Activated T-helper 2 cell treated with anti-CD3 and anti-CD28 coated beads, Interferon-gamma antibody, Interleukin-2, Interleukin-4, amounts not matched to agents 10 μg/mL and 5 μg/mL and 100 μg/mL, durations not matched to agents 14 hours and 24 hours and 36 hours (primary cell): ENCODE measurements at regions of chrX and their contacts with region 1.

Region 1: DNA sequence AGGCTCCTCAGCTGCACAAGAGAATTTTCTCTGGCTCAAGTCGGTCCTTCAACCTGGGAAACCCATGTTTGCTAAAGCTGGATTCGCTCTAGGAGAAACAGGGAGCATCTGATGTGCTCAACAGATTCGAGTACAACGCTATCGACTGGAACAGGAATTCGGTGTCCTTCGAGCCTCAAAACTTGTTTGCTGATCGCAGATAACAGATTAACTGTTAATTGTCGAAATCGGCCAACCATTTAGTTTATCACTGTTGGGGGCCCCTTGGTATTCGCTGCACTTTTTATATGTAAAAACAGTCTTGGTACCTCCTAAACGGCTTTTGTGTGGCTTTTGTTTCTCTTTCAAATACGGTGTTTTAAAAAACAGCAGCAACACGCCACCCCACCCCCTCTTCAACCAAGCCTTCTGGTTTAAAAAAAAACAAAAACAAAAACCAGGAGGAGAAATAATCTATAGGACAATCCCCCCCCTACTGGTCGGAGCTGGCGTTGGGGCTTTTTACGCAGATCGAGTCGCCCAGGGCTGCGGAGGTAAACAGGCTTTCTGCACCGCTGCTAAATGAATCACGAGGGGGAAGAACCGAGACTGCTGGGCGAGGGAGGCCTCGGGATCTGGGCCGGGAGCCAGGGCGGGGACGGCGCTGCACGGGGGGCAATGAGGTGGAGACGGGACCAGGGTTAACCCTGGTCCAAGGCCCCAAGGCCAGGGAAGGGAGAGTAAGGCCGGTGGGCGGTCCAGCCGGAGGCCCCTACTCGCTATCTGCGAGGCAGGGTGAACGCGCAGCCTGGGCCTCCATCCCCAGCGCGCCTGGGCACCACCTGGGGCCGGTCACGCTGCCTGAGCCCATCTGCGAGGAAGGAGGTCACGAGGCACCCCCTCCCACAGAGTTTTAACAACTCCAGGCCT is 71.7 kb upstream of the BCOR start:
- DNase-seq: peak; percentile 80
- H3K4me3 Mint-ChIP-seq: peak overlapping the region; percentile 81
- H3K27ac Mint-ChIP-seq: peak overlapping the region; percentile 94
- H3K4me1 Mint-ChIP-seq: peaks cover 37% of the 10 kb centered on the region
- H3K27me3 Mint-ChIP-seq: no peaks in the 10 kb centered on the region

Region 2: DNA sequence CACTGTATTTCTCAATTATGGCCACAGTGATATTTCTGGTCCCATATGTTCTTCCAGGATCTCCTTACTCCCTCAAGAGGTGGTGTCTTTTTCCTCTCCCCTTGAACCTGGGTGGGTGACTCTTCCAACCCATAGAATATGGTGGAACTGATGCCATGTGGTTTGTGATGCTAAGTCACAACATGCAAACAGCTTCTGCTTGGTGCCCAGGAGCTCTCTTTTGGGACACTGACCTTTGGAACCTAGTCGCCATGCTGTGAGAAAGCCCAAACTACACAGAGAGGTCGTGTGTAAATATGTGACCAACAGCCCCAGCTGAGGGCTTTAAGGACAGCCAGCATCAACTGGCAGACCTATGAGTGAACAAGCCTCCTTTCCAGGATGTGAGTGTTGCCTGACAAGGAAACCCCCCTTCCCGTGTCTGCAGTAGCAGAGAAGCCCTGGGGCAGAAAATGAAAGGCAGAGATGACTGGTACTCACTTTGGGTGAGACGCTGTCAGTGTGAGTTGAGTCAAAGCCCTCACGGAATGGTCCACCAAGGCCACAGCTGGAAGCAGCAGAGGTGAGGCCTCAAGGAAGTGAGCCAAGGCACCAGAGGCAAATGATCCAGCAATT is 295.1 kb before region 1 on chrX:
- intact Hi-C with region 1: loop called (anchors 5 kb)
- DNase-seq: peak; percentile 64
- H3K4me3 Mint-ChIP-seq: peak overlapping the region; percentile 7
- H3K27ac Mint-ChIP-seq: peak overlapping the region; percentile 89
- H3K4me1 Mint-ChIP-seq: peaks cover 31% of the 10 kb centered on the region
- H3K27me3 Mint-ChIP-seq: no peaks in the 10 kb centered on the region

Region 3: GRCh38 chrX:40108959-40109287 is 60.5 kb before region 1 on chrX:
- intact Hi-C with region 1: no loop called
- DNase-seq: peak; percentile 51
- H3K4me3 Mint-ChIP-seq: no peak overlapping the region
- H3K27ac Mint-ChIP-seq: no peak overlapping the region
- H3K4me1 Mint-ChIP-seq: peaks cover 16% of the 10 kb centered on the region
- H3K27me3 Mint-ChIP-seq: peaks cover 3% of the 10 kb centered on the region

Region 4: GRCh38 chrX:40278340-40279090 is 109.1 kb after region 1 on chrX:
- intact Hi-C with region 1: loop called (anchors 5 kb)
- DNase-seq: peak; percentile 37
- H3K4me3 Mint-ChIP-seq: peak overlapping the region; percentile 17
- H3K27ac Mint-ChIP-seq: peak overlapping the region; percentile 42
- H3K4me1 Mint-ChIP-seq: peaks cover 30% of the 10 kb centered on the region
- H3K27me3 Mint-ChIP-seq: peaks cover 4% of the 10 kb centered on the region